ENCODE measurements at regions of chr1 and their contacts with region 1.

Region 1: GRCh38 chr1:147670317-147671041 is at the start of gene ACP6:
- ATAC-seq: peak; percentile 81 to 99 (median 98)
- H3K4me3 ChIP-seq: peak within 1 kb of the TSS; percentile 40 to 54 (median 48)
- H3K27ac ChIP-seq: peak within 1 kb of the TSS in 1 of 2 donors; percentile 48
- H3K4me1 ChIP-seq: peaks cover 5 to 10% of the 10 kb centered on the region in 2 donors
- total RNA-seq, gene ACP6: 6.4 to 62.7 (median 14.3) TPM

Region 2: DNA sequence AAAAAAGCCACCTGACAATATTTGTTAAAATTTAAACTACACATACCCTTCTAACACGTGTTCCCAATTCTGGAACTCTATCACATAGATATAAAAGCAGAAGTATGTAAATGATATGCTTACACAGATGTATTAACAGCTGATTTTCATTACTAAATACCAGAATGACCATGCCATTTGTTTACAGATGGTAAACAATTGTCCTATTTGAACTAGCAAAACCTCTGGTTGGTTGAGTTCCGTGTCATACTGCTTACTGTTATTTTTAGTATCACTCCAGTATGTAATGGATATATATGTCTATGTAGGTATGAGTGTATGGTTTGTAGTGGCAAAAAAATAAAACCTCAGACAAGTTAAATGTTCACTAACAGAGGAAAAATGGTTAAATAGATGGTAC is 357.2 kb before region 1 on chr1:
- in situ Hi-C with region 1: no loop called
- ATAC-seq: no peak
- H3K4me3 ChIP-seq: no peak overlapping the region
- H3K27ac ChIP-seq: no peak overlapping the region
- H3K4me1 ChIP-seq: no peaks in the 10 kb centered on the region

Region 3: GRCh38 chr1:147771231-147772125 is 101.0 kb after region 1 on chr1:
- in situ Hi-C with region 1: loop called in 1 of 9 experiments (anchors 25 kb)
- ATAC-seq: peak in 7 of 8 experiments; percentile 41 to 95 (median 62)
- H3K4me3 ChIP-seq: no peak overlapping the region
- H3K27ac ChIP-seq: peak overlapping the region in 1 of 2 donors; percentile 48
- H3K4me1 ChIP-seq: peaks cover 12 to 31% of the 10 kb centered on the region in 2 donors

Region 4: DNA sequence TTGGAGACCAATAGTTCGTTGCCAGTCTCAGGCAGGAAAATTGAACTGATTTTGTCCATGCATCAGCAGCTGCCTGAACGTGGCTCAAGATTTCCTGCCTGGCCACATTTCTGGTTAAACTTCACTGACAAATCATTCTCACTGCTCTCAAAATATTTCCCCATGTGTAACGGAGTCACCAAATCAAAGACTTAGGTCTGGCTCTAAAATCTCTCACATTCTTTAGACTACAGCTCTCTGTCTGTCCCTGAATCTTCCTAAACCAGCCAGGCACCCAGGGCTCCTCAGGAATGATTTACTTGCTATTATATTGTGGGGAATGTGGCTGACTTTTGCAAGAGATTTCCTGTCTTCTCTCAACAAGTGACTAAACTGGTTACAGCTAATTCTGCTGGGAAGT is 182.9 kb after region 1 on chr1:
- in situ Hi-C with region 1: no loop called
- ATAC-seq: peak in 1 of 8 experiments; percentile 20
- H3K4me3 ChIP-seq: no peak overlapping the region
- H3K27ac ChIP-seq: no peak overlapping the region
- H3K4me1 ChIP-seq: peaks cover 5 to 21% of the 10 kb centered on the region in 2 donors